CD8-positive, alpha-beta memory T cell (primary cell): ENCODE measurements at regions of chr6 and their contacts with region 1.

Region 1: DNA sequence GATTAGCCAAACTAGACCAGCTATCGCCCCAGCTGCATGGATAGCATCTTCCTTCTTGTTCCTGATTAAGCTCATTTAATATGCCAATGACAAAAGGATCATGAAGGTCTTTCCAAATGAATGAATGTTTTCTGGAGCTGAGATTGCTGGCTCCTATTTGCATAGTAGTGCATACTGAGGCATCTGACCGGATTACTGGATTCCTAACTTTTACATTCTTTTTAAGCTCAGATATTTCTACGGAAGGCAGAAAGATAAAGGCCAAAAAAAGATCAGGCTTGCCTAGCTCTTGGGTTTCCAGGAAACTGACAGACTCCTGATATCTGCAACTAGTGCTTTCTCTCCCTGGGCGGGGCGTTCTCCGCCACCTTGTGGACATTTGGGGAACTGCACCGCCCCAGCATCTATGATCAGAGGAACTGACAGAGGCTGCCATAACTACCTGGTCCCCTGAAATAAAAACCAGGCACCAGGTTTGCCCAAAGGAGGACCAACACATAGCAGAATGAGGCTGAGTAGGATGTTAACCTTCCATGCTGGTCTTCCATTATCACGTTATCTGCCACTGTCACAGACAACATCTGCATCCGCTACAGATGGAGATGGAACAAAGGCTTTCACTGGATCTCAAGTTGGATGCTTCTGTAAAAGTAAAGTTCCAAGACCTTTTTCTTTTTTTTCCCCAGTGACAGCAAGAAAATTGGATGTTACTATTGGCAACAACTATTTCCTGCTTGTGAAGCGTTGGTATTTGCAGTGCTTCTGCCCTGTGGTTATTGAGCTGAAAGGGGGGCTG is 33.2 kb downstream of the NT5E start:
- DNase-seq: peak; percentile 65 to 84 (median 68)
- H3K4me3 ChIP-seq: no peak overlapping the region
- H3K4me3 Mint-ChIP-seq: no peak overlapping the region
- H3K27ac ChIP-seq: no peak overlapping the region
- H3K27ac Mint-ChIP-seq: peak overlapping the region in 2 of 8 donors; percentile 18 to 29
- H3K4me1 ChIP-seq: no peaks in the 10 kb centered on the region
- H3K4me1 Mint-ChIP-seq: peaks cover 12 to 20% (median 15%) of the 10 kb centered on the region in 3 donors
- H3K27me3 ChIP-seq: no peaks in the 10 kb centered on the region
- H3K27me3 Mint-ChIP-seq: peaks cover 2 to 5% of the 10 kb centered on the region in 2 donors

Region 2: DNA sequence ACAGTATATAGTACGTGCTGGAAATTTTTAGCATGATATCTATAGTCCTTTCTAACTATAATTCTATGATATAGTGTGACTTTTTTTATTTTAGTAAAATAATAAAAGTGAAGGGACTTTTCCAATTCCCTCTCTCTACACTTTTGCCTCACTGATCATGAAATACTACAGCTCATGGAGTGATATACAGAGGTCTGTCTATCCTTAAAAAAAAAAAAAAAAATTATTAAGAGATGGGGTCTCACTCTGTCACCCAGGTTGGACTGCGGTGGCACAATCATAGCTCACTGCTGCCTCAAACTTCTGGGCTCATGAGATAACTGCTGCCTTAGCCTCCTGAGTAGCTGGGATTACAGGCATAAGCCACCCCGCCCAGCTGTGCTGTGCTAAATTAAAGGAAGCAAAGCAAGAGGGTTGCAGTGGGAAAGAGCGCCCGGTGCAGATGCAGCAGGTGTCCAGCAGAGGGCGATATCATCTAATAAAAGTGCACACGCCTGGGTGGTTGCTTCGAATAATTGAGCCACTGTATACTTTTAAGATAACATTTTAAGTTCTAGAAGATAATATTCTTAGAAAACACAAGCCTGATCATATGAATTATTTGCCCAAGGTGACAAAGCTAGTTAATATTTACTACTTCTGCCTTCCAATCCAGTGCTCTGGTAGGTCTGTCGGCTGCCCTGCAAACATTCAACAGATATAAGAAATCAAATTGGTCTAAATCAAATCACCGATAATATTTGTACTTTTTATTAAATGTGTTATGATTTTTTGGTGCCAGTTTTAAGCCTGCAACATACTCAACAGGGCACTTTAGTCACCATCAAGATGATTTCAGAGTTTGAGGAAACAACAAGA is 128.1 kb before region 1 on chr6:
- CTCF ChIA-PET with region 1: interaction called, 47 read pairs
- POLR2A ChIA-PET with region 1: no interaction called
- DNase-seq: peak; percentile 27 to 69 (median 41)
- H3K4me3 ChIP-seq: no peak overlapping the region
- H3K4me3 Mint-ChIP-seq: no peak overlapping the region
- H3K27ac ChIP-seq: no peak overlapping the region
- H3K27ac Mint-ChIP-seq: no peak overlapping the region
- H3K4me1 ChIP-seq: no peaks in the 10 kb centered on the region
- H3K4me1 Mint-ChIP-seq: no peaks in the 10 kb centered on the region
- H3K27me3 ChIP-seq: no peaks in the 10 kb centered on the region
- H3K27me3 Mint-ChIP-seq: peaks cover 3% of the 10 kb centered on the region in 2 donors

Region 3: DNA sequence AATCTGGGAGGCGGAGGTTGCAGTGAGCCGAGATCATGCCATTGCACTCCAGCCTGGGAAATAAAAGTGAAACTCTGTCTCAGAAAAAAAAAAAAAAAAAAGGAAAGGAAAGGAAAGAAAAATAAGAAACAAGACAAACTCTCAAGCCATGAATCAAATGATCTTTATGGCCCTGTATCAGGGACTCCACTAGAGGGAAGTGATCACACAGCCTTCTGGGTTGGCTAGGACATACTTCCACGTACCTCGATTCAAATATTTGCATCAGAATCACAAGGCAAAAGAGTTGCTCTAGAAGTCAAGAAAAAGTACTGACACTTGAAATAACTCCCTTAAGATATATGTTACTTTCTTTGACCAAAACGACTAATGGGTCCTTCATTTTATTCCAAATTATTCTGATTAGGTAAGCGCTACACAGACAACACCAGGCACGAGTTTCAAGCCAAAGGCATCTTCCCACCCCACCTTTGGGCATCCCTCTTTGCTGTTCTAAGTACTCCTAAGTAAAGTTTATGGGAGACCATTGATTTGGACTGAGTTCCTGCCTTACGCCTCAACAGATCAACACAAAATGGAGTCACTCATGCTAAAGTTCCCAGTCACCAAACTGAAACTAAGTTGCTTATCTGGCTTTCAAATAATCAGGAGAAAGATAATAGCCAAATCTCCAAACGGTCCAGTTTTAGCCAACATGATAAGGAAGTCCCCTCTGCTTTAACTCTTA is 110.8 kb before region 1 on chr6:
- CTCF ChIA-PET with region 1: interaction called, 15 read pairs
- POLR2A ChIA-PET with region 1: interaction called, 3 read pairs
- DNase-seq: peak in 1 of 5 donors; percentile 21
- H3K4me3 ChIP-seq: no peak overlapping the region
- H3K4me3 Mint-ChIP-seq: no peak overlapping the region
- H3K27ac ChIP-seq: no peak overlapping the region
- H3K27ac Mint-ChIP-seq: no peak overlapping the region
- H3K4me1 ChIP-seq: no peaks in the 10 kb centered on the region
- H3K4me1 Mint-ChIP-seq: peaks cover 4 to 12% (median 6%) of the 10 kb centered on the region in 3 donors
- H3K27me3 ChIP-seq: no peaks in the 10 kb centered on the region
- H3K27me3 Mint-ChIP-seq: peaks cover 0 to 4% of the 10 kb centered on the region in 2 donors

Region 4: DNA sequence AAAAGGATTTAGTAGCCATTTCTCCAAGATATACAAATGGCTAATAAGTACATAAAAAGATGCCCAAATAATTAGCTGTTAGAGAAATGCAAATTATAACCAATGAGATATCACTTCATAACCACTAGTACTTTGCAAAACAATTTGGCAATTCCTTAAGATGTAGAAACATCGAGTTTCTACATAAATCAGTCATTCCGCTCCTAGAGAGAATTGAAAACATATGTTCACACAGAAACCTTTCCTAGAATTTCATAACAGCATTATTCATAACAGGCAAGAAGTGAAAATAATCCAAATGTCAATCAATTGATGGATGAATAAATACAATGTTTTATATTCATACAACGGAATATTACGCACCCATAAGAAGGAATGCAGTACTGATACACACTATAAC is 53.8 kb before region 1 on chr6:
- CTCF ChIA-PET with region 1: no interaction called
- POLR2A ChIA-PET with region 1: no interaction called
- DNase-seq: no peak
- H3K4me3 ChIP-seq: no peak overlapping the region
- H3K4me3 Mint-ChIP-seq: no peak overlapping the region
- H3K27ac ChIP-seq: no peak overlapping the region
- H3K27ac Mint-ChIP-seq: no peak overlapping the region
- H3K4me1 ChIP-seq: no peaks in the 10 kb centered on the region
- H3K4me1 Mint-ChIP-seq: peaks cover 0 to 3% (median 0%) of the 10 kb centered on the region in 3 donors
- H3K27me3 ChIP-seq: no peaks in the 10 kb centered on the region
- H3K27me3 Mint-ChIP-seq: peaks cover 6 to 8% of the 10 kb centered on the region in 2 donors

Region 5: DNA sequence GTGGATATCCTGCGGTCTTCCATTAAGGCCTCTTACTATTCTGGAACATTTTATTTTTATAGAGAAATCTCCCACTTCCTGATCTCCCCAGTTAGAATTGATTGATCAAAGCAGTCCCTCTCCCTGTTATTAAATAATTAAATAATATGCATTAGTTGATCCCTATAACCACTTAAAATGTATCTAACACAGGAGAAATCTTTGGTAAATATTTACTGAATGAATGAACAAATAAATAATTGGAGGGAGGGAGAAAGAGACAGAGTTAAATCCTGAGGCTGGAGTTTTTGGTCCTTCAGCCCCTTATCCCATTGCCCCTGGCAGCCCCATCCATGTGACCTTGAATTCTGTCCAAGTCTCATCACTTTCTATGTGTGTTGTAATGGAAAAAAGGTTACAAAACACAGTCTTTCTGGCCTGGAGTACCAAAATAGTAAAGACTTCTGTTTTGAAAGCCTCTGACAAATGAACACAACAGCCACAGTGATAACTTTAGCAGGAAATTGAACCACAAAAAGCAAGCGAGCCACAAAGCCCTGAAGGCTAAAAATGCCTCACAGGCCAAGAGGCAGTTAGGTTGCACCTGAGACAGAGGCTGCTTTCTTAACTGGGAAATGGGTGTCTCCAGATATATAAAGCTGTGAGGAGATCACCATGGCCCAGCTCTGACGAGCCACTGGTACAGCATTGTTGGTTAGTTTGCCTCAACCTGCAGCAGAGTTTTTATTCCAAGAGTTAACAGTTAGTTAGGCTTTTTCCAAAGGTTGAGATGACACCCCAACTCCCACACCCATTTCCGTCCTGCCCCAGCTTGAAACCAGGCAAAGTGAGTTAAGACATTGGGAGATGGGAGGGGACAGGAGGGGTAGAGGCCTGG is 21.9 kb before region 1 on chr6:
- CTCF ChIA-PET with region 1: interaction called, 115 read pairs
- POLR2A ChIA-PET with region 1: no interaction called
- DNase-seq: peak; percentile 8 to 70 (median 56)
- H3K4me3 ChIP-seq: no peak overlapping the region
- H3K4me3 Mint-ChIP-seq: peak overlapping the region; percentile 5 to 82 (median 65)
- H3K27ac ChIP-seq: peak overlapping the region; percentile 18
- H3K27ac Mint-ChIP-seq: peak overlapping the region; percentile 77 to 97 (median 88)
- H3K4me1 ChIP-seq: peaks cover 43% of the 10 kb centered on the region
- H3K4me1 Mint-ChIP-seq: peaks cover 87 to 100% (median 99%) of the 10 kb centered on the region in 3 donors
- H3K27me3 ChIP-seq: no peaks in the 10 kb centered on the region
- H3K27me3 Mint-ChIP-seq: peaks cover 0 to 4% of the 10 kb centered on the region in 2 donors

Region 6: DNA sequence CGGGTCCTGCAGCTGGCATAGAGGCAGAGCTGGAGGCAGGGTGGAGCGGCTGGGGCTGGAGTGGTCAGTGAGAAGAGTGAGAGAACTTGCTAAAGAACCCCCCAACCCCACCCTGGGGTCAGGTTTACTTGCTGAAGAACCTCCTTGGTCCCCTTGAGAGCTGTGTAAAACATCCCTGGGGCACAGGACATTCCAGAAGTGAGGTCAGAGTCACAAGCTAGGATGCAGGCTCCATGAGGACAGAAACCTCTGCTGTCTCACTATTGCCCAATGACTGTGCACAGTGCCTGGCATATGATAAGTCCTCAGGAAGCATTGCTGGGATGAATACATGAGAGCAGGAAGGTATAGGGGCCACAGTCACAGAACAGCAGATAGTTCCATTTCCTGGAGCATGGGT is 14.8 kb before region 1 on chr6:
- CTCF ChIA-PET with region 1: interaction called, 18 read pairs
- POLR2A ChIA-PET with region 1: no interaction called
- DNase-seq: no peak
- H3K4me3 ChIP-seq: no peak overlapping the region
- H3K4me3 Mint-ChIP-seq: no peak overlapping the region
- H3K27ac ChIP-seq: no peak overlapping the region
- H3K27ac Mint-ChIP-seq: no peak overlapping the region
- H3K4me1 ChIP-seq: peaks cover 18% of the 10 kb centered on the region
- H3K4me1 Mint-ChIP-seq: peaks cover 24 to 50% (median 29%) of the 10 kb centered on the region in 3 donors
- H3K27me3 ChIP-seq: no peaks in the 10 kb centered on the region
- H3K27me3 Mint-ChIP-seq: no peaks in the 10 kb centered on the region

Region 7: DNA sequence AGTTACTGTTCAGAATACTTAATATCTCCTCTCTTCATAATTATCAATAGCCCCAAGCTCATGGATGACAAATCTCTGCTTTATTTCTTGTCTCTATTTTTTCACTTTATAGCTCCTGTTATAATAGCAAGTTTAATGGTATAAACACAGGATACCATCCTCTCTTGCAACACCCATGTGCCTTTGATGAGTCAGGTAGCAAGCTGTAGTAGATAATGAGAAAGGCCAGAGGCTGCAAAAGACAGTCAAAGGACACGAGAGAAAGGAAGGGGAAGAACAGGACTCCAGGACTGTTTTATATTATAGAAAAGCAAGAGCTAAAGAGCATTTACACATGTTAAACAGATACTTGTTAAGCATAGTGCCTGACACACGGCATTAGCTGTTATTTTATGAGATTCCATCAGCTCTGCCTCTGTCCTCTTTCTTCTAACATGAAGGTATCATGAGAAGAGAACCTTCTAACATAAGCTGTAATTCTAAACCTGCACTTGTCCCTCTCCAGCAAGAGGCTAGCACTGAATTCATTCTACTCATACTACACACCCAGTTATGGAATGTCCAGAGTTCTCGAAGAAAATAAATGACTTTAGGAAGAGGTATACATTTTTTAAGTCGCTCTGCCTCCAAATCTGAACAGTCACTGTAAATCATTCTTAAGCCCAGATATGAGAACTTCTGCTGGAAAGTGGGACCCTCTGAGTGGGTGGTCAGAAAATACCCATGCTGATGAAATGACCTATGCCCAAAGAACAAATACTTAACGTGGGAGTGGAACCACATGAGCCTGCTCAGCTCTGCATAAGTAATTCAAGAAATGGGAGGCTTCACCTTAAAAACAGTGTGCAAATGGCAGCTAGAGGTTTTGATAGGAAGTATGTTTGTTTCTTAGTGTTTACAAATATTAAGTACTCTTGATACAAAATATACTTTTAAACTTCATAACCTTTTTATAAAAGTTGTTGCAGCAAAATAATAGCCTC is 11.7 kb after region 1 on chr6:
- CTCF ChIA-PET with region 1: interaction called, 29 read pairs
- POLR2A ChIA-PET with region 1: no interaction called
- DNase-seq: no peak
- H3K4me3 ChIP-seq: no peak overlapping the region
- H3K4me3 Mint-ChIP-seq: no peak overlapping the region
- H3K27ac ChIP-seq: no peak overlapping the region
- H3K27ac Mint-ChIP-seq: peak overlapping the region in 2 of 8 donors; percentile 6 to 37
- H3K4me1 ChIP-seq: peaks cover 5% of the 10 kb centered on the region
- H3K4me1 Mint-ChIP-seq: peaks cover 18 to 21% (median 19%) of the 10 kb centered on the region in 3 donors
- H3K27me3 ChIP-seq: no peaks in the 10 kb centered on the region
- H3K27me3 Mint-ChIP-seq: no peaks in the 10 kb centered on the region